K562 (cell line): ENCODE measurements at regions of chr2 and their contacts with region 1.

Region 1: DNA sequence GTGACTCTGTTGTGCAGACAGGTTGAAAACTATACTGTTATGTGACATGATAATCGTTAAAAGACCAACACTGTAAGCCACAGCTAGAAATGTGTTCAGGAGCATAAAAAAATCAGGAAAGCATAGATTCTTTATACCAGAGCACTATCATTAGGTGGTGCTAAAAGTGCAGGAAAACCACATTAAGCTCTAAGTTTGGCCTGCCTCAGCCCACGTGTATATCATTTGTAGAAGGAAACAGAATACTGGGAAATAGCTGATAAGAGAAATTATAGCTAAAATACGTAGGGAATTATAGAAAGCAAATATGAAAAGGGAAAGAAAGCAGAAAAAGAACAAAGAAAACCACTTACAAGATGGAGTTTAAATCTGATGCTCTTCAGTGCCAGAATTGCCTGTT is 26.5 kb upstream of the C2orf74 start:
- DNase-seq: peak in 2 of 4 experiments; percentile 37 to 59
- ATAC-seq: peak; percentile 92
- H3K4me3 ChIP-seq: no peak overlapping the region
- H3K27ac ChIP-seq: no peak overlapping the region
- H3K4me1 ChIP-seq: no peaks in the 10 kb centered on the region; a peak in 1 of 5 replicates
- H3K27me3 ChIP-seq: no peaks in the 10 kb centered on the region
- CTCF ChIP-seq: peak; percentile 31 to 81 (median 57); a peak in 5 of 6 replicates
- EP300 ChIP-seq: no peak
- POLR2A ChIP-seq: no peak
- RAD21 ChIP-seq: peak; percentile 71 to 88

Region 2: DNA sequence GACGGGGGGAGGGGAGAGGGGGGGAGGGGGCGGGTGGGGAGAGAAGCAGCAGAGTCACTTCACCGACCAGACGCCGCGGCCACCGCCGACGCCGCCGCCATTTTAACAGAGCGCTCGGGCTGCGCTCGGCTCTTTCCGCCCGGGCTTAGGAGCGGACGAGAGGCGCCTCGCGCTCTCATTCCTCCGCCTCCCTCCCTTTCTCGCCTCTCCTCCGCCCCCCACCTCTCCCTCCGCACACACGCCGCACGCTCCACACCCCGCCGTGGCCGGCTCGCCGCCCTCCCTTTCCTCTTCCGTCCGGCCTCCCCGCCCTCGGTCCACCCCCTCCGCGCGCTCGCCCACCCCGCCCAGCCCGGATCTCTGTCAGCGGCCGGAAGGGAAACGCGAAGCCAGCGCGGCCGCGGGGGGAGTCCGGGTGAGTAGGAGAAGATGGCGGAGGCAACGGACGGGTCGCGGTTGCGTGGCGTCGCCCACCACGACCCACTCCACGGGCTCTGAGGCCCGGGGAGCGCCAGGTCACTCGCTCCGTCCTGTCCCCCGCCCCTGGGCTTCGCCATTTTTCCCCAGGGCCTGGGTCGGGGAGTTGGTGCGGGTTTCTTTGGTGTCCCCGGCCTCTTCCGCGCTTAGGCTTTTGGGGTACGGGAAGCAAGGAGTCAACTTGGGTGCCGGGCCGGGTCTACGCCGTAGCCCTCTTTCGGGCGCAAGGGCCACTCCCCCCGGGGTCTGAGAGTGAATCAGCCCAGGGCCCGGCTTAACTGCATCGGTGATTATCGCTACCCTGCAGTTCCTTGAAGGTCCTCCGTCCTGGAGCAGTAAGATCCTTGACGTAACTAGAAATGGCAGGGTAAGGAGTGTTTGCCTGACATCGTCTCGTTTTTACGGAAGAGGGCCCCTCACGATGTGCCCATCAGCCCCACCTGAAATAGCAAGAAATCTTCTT is 335.7 kb after region 1 on chr2 and contains the start of gene USP34:
- CTCF ChIA-PET with region 1: no interaction called
- POLR2A ChIA-PET with region 1: no interaction called
- in situ Hi-C with region 1: no loop called
- intact Hi-C with region 1: loop called (anchors 10 kb)
- DNase-seq: peak; percentile 86 to 95 (median 90)
- ATAC-seq: peak; percentile 90
- H3K4me3 ChIP-seq: peak within 1 kb of the TSS; percentile 100
- H3K27ac ChIP-seq: peak within 1 kb of the TSS; percentile 100
- H3K4me1 ChIP-seq: peaks cover 14 to 20% of the 10 kb centered on the region in 2 experiments; a peak in 4 of 5 replicates
- H3K27me3 ChIP-seq: no peaks in the 10 kb centered on the region
- CTCF ChIP-seq: no peak
- EP300 ChIP-seq: peak; percentile 15; the same call in 1 of the 2 replicates
- POLR2A ChIP-seq: peak; percentile 93
- RAD21 ChIP-seq: 0 out of 4 replicates have a peak, but pooled peaks of 1 of the 2 experiments have one; percentile 8
- polyA plus RNA-seq, gene USP34: 19.8 to 38.7 TPM

Region 3: DNA sequence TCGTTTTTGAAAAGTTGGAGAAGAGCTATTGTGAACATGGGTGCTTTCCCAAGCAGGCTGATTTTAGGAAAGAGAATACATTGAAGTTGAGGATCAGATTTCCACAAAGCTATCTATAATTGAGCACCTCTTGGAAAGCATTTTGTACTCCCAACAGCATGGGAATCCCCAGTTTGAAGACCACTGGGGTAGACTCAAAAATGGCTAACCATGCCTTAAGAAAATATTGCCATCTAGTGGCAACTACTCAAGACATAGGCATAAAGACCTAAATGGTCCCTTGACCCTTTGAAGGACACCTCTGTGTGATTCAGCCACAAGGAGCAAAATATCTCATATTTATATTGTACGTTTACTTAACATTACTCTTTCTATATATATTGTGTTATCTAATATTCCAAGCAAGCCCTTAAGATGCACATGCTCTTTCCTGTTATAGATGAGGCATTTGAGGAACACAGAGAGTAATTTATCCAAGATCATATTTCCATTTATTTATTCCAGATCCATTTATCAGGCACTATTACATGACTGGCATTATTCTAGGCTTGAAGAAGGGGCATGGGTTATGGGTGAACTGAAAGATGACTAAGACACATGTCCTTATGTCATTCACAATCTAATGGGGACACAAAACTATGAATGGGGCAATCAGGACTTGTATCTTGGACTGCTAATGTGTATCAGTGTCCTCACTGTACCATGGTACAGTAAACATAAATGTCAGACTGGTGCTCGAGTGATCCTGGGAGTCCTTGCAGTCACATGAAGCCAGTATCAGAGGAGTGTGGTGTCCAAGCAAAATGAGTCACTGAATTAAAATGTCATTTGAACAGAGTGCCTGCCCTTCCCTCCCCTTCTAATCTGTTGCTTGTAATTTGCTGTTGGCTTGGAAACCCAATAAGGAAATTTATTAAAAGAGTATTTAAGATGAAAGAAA is 523.6 kb after region 1 on chr2:
- CTCF ChIA-PET with region 1: no interaction called
- POLR2A ChIA-PET with region 1: no interaction called
- in situ Hi-C with region 1: no loop called
- intact Hi-C with region 1: loop called (anchors 1 kb)
- DNase-seq: peak; percentile 40 to 66 (median 50)
- ATAC-seq: peak; percentile 94
- H3K4me3 ChIP-seq: no peak overlapping the region
- H3K27ac ChIP-seq: 0 out of 3 replicates have a peak overlapping the region, but pooled peaks have one; percentile 7
- H3K4me1 ChIP-seq: 0 out of 5 replicates have a peak, but pooled peaks cover 0 to 2% of the 10 kb centered on the region in 2 experiments
- H3K27me3 ChIP-seq: no peaks in the 10 kb centered on the region; a peak in 1 of 5 replicates
- CTCF ChIP-seq: peak; percentile 45 to 72 (median 69)
- EP300 ChIP-seq: no peak
- POLR2A ChIP-seq: no peak
- RAD21 ChIP-seq: peak; percentile 57 to 88

Region 4: GRCh38 chr2:61905372-61906185 is 770.1 kb after region 1 on chr2 and contains the start of gene COMMD1:
- CTCF ChIA-PET with region 1: interaction called, 5 read pairs
- POLR2A ChIA-PET with region 1: no interaction called
- in situ Hi-C with region 1: no loop called
- intact Hi-C with region 1: loop called (anchors 10 kb)
- DNase-seq: peak; percentile 39 to 84 (median 56)
- ATAC-seq: peak; percentile 98
- H3K4me3 ChIP-seq: peak within 1 kb of the TSS; percentile 70
- H3K27ac ChIP-seq: no peak within 1 kb of the TSS; the same call in 2 of the 3 replicates
- H3K4me1 ChIP-seq: peaks cover 0 to 4% of the 10 kb centered on the region in 2 experiments; a peak in 1 of 5 replicates
- H3K27me3 ChIP-seq: no peaks in the 10 kb centered on the region
- CTCF ChIP-seq: no peak
- EP300 ChIP-seq: no peak
- POLR2A ChIP-seq: peak; percentile 76
- RAD21 ChIP-seq: no peak
- polyA plus RNA-seq, gene COMMD1: 56.6 to 77.0 TPM